Cardiac septum (tissue), 1 donor: ENCODE measurements at regions of chr19 and their contacts with region 1.

Region 1: GRCh38 chr19:3429581-3430080 is 50.7 kb downstream of the SMIM24 start:
- DNase-seq: peak; percentile 94

Region 2: GRCh38 chr19:3324321-3324856 is 105.2 kb before region 1 on chr19:
- intact Hi-C with region 1: loop called (anchors 2 kb)
- DNase-seq: no peak

Region 3: DNA sequence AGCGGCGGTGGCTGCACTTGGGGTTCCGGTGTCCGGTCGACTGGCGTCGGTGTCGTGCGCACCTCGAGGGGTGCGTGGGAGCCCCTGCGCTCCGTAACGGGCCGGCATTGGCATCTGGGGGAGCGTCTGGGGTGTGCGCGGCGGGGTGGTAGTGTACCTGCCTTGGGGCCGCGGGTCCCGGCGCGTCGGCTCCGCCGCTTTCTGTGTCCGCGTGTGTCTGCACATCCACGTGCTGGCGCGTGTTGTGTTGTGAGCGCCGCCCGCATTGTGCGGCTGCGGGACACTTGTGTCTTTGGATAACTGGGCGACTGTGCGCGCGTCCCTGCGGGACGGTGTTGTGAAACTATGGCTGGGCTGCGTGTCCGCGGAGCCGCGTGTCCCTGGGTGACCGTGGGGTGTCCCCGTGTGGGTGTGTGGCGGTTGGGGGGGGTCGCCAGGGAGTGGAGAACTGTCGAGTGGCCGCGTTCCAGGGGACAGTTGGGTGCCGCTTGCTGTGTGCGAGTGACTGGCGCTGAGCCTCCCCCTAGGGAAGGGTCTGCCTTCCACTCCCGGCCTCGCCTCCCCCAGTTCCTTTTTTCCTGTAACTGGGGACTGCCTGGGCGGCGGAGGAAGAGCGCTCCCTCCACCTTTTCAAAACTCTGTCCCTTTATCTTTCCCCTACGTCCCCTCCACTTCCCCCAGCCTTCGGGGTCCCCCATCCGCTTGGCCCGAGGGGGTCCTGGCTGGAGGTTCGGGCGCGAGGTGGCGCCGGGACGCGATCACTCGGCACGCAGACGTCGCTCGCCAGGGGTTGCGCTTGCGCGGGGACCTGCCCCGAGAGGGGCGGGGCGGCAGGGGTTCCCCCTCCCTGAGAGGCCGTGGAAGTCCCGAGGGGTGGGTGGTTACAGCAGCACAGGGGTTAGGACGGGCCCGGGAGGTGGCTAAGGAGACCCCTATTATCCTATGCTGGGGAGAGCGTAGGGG is 68.9 kb before region 1 on chr19:
- intact Hi-C with region 1: loop called (anchors 2 kb)
- DNase-seq: peak; percentile 94

Region 4: GRCh38 chr19:3450796-3451411 is 21.3 kb after region 1 on chr19:
- intact Hi-C with region 1: no loop called
- DNase-seq: peak; percentile 89